PC-3 (cell line): ENCODE measurements at regions of chr4 and their contacts with region 1.

Region 1: GRCh38 chr4:147518846-147519767 is 38.2 kb downstream of the EDNRA start:
- DNase-seq: peak; percentile 74
- ATAC-seq: peak; percentile 64
- H3K4me3 ChIP-seq: no peak overlapping the region
- H3K27ac ChIP-seq: no peak overlapping the region
- H3K4me1 ChIP-seq: peaks cover 12% of the 10 kb centered on the region; the same call in 1 of the 2 replicates
- H3K27me3 ChIP-seq: no peaks in the 10 kb centered on the region
- CTCF ChIP-seq: peak; percentile 89

Region 2: GRCh38 chr4:147111033-147111367 is 408.1 kb before region 1 on chr4:
- CTCF ChIA-PET with region 1: no interaction called
- POLR2A ChIA-PET with region 1: no interaction called
- intact Hi-C with region 1: loop called (anchors 2 kb)
- DNase-seq: peak; percentile 43
- ATAC-seq: peak; percentile 38; the same call in 1 of the 2 replicates
- H3K4me3 ChIP-seq: no peak overlapping the region
- H3K27ac ChIP-seq: no peak overlapping the region
- H3K4me1 ChIP-seq: no peaks in the 10 kb centered on the region
- H3K27me3 ChIP-seq: no peaks in the 10 kb centered on the region
- CTCF ChIP-seq: peak; percentile 59

Region 3: DNA sequence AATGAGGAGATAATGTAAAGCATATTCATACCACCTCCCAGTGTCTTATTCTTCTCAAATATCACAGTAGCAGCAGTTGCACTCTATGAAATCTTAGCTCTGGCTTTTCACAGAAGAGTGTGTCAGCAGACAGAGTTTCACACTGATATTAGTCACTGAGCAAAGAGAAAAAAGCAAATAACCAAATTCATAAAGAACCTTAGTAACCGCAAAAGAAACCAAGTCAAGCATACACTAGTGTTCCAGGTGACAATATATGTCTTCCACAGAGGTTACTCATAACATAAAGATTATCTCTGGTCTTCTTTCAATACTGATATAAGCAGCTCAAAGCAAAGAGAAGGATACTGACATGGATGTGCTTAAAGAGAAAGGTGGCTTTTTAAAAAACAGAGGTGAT is 219.9 kb before region 1 on chr4:
- CTCF ChIA-PET with region 1: no interaction called
- POLR2A ChIA-PET with region 1: no interaction called
- intact Hi-C with region 1: loop called (anchors 10 kb)
- DNase-seq: peak; percentile 85
- ATAC-seq: peak; percentile 94
- H3K4me3 ChIP-seq: no peak overlapping the region
- H3K27ac ChIP-seq: peak overlapping the region; percentile 78
- H3K4me1 ChIP-seq: peaks cover 19% of the 10 kb centered on the region
- H3K27me3 ChIP-seq: no peaks in the 10 kb centered on the region
- CTCF ChIP-seq: no peak

Region 4: DNA sequence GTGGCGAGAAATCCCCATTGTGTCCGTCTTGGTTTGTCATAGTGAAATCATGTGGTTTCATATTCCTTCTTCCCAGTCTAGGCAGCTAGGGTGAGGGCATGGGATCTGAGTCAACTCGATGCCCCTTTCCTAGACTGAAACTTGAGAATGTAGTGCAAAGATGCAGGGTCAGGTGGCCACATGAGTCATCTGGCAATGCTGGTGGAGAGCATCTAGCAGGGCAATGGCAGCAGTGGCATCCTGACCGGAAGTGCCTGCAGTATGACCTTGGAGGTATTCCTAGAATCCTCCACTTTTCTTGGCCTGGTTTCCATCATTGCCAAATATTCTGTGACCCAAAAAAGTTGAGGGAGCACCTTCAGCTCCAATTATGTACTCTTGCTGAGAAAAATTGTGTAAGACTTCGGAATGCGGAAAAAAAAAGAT is 59.0 kb after region 1 on chr4:
- CTCF ChIA-PET with region 1: interaction called, 6 read pairs
- POLR2A ChIA-PET with region 1: interaction called, 7 read pairs
- intact Hi-C with region 1: loop called (anchors 5 kb)
- DNase-seq: peak; percentile 96
- ATAC-seq: peak; percentile 93
- H3K4me3 ChIP-seq: no peak overlapping the region
- H3K27ac ChIP-seq: peak overlapping the region; percentile 91
- H3K4me1 ChIP-seq: peaks cover 47% of the 10 kb centered on the region
- H3K27me3 ChIP-seq: no peaks in the 10 kb centered on the region
- CTCF ChIP-seq: no peak

Region 5: GRCh38 chr4:147731580-147732517 is 212.7 kb after region 1 on chr4 and contains the start of gene ARHGAP10:
- CTCF ChIA-PET with region 1: no interaction called
- POLR2A ChIA-PET with region 1: no interaction called
- intact Hi-C with region 1: no loop called
- DNase-seq: peak; percentile 71
- ATAC-seq: peak; percentile 67
- H3K4me3 ChIP-seq: peak within 1 kb of the TSS; percentile 95
- H3K27ac ChIP-seq: peak within 1 kb of the TSS; percentile 59
- H3K4me1 ChIP-seq: peaks cover 56% of the 10 kb centered on the region
- H3K27me3 ChIP-seq: no peaks in the 10 kb centered on the region
- CTCF ChIP-seq: no peak
- total RNA-seq, gene ARHGAP10: 9.0 and 12.0 TPM in 2 replicates

Region 6: DNA sequence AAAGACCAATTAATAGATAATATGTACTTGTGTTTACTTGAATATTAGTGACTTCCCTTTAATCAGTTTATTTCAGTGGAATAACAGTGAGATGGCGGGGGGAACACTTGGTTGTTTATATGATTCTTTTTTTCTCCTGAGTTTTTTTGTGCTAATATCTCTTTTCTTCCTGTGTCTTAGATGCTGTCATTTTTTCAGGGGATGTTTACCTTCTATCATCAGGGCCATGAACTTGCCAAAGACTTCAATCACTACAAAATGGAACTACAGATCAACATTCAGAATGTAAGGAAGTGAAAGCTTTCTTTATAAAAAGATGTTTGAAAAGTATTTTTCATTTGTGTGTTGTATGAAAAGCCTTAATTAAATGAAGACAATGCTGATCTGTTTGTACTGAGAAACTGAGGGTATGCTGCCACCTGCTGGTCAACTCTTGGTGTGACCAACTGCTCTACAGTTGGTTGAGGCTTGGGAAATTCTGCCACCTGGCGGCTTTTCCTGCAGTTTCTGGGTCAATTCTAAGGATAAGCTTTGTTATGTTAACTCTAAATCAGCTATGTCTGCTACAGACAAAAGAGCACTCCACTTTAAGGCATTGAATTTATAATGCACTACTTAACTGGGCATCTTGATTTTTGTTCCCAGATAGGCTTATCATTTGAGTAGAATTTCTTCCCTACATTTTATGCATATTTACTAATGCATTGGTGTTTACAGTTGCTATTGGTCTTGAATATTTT is 347.6 kb after region 1 on chr4:
- CTCF ChIA-PET with region 1: interaction called, 3 read pairs
- POLR2A ChIA-PET with region 1: no interaction called
- intact Hi-C with region 1: loop called (anchors 10 kb)
- DNase-seq: peak; percentile 89
- ATAC-seq: peak; percentile 88
- H3K4me3 ChIP-seq: no peak overlapping the region
- H3K27ac ChIP-seq: no peak overlapping the region
- H3K4me1 ChIP-seq: no peaks in the 10 kb centered on the region
- H3K27me3 ChIP-seq: no peaks in the 10 kb centered on the region
- CTCF ChIP-seq: peak; percentile 99